Spleen (tissue), 13 donors: ENCODE measurements at regions of chr12 and their contacts with region 1.

Region 1: GRCh38 chr12:71685914-71686665 is at the start of gene TMEM19:
- DNase-seq: peak; percentile 98
- H3K4me3 ChIP-seq: peak within 1 kb of the TSS; percentile 54 to 93 (median 69)
- H3K27ac ChIP-seq: peak within 1 kb of the TSS; percentile 75 to 96 (median 92)
- H3K4me1 ChIP-seq: peaks cover 10 to 66% (median 47%) of the 10 kb centered on the region in 6 donors
- H3K27me3 ChIP-seq: no peaks in the 10 kb centered on the region
- CTCF ChIP-seq: peak in 7 of 11 experiments; percentile 16 to 61 (median 46)
- POLR2A ChIP-seq: peak in 1 of 3 donors; percentile 26
- total RNA-seq, gene TMEM19: 26.8 to 42.4 (median 30.9) TPM

Region 2: GRCh38 chr12:71754461-71755145 is 68.5 kb after region 1 on chr12 and contains the start of gene RAB21:
- intact Hi-C with region 1: loop called (anchors 10 kb)
- DNase-seq: peak; percentile 100
- H3K4me3 ChIP-seq: peak within 1 kb of the TSS; percentile 53 to 88 (median 78)
- H3K27ac ChIP-seq: peak within 1 kb of the TSS; percentile 96 to 99 (median 98)
- H3K4me1 ChIP-seq: peaks cover 13 to 48% (median 34%) of the 10 kb centered on the region in 6 donors
- H3K27me3 ChIP-seq: peaks cover 0 to 8% (median 0%) of the 10 kb centered on the region in 7 donors
- CTCF ChIP-seq: peak; percentile 39 to 72 (median 54)
- POLR2A ChIP-seq: peak; percentile 35 to 61 (median 59)
- total RNA-seq, gene RAB21: 25.9 to 75.4 (median 66.1) TPM